MCF 10A (cell line): ENCODE measurements at regions of chr4 and their contacts with region 1.

Region 1: GRCh38 chr4:15938182-15938581 is 358 bp downstream of the FGFBP1 start:
- DNase-seq: peak; percentile 80
- H3K4me3 Mint-ChIP-seq: peak overlapping the region; percentile 58
- H3K27ac Mint-ChIP-seq: no peak overlapping the region
- H3K4me1 Mint-ChIP-seq: peaks cover 30% of the 10 kb centered on the region
- H3K27me3 Mint-ChIP-seq: no peaks in the 10 kb centered on the region
- CTCF ChIP-seq: no peak

Region 2: GRCh38 chr4:15906024-15906443 is 32.1 kb before region 1 on chr4:
- CTCF ChIA-PET with region 1: interaction called, 4 read pairs
- POLR2A ChIA-PET with region 1: interaction called, 15 read pairs
- intact Hi-C with region 1: no loop called
- DNase-seq: peak; percentile 99
- H3K4me3 Mint-ChIP-seq: peak overlapping the region; percentile 52
- H3K27ac Mint-ChIP-seq: peak overlapping the region; percentile 33
- H3K4me1 Mint-ChIP-seq: peaks cover 7% of the 10 kb centered on the region
- H3K27me3 Mint-ChIP-seq: no peaks in the 10 kb centered on the region
- CTCF ChIP-seq: no peak

Region 3: DNA sequence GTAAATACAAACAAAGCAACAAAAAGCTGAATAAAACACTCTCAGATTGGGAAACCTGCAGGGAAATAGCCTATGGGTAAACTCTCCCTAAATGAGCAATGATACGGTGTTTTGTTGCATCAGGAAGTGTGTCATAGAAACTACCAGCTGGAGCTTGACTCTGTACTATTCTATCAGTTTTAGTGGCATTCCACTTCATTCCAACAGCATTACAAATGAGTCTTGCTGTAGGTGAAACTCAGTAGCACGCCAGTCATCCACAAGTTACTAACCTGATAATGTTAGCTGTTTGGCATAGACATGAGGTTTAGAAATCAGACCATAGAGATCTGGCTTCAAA is 24.6 kb before region 1 on chr4:
- CTCF ChIA-PET with region 1: interaction called, 4 read pairs
- POLR2A ChIA-PET with region 1: interaction called, 14 read pairs
- intact Hi-C with region 1: no loop called
- DNase-seq: peak; percentile 95
- H3K4me3 Mint-ChIP-seq: no peak overlapping the region
- H3K27ac Mint-ChIP-seq: peak overlapping the region; percentile 67
- H3K4me1 Mint-ChIP-seq: peaks cover 49% of the 10 kb centered on the region
- H3K27me3 Mint-ChIP-seq: no peaks in the 10 kb centered on the region
- CTCF ChIP-seq: no peak

Region 4: GRCh38 chr4:15920723-15921591 is 17.2 kb before region 1 on chr4:
- CTCF ChIA-PET with region 1: interaction called, 3 read pairs
- POLR2A ChIA-PET with region 1: interaction called, 28 read pairs
- intact Hi-C with region 1: no loop called
- DNase-seq: peak; percentile 97
- H3K4me3 Mint-ChIP-seq: no peak overlapping the region
- H3K27ac Mint-ChIP-seq: peak overlapping the region; percentile 36
- H3K4me1 Mint-ChIP-seq: peaks cover 40% of the 10 kb centered on the region
- H3K27me3 Mint-ChIP-seq: no peaks in the 10 kb centered on the region
- CTCF ChIP-seq: no peak